ENCODE measurements at regions of chr12 and their contacts with region 1.

Region 1: DNA sequence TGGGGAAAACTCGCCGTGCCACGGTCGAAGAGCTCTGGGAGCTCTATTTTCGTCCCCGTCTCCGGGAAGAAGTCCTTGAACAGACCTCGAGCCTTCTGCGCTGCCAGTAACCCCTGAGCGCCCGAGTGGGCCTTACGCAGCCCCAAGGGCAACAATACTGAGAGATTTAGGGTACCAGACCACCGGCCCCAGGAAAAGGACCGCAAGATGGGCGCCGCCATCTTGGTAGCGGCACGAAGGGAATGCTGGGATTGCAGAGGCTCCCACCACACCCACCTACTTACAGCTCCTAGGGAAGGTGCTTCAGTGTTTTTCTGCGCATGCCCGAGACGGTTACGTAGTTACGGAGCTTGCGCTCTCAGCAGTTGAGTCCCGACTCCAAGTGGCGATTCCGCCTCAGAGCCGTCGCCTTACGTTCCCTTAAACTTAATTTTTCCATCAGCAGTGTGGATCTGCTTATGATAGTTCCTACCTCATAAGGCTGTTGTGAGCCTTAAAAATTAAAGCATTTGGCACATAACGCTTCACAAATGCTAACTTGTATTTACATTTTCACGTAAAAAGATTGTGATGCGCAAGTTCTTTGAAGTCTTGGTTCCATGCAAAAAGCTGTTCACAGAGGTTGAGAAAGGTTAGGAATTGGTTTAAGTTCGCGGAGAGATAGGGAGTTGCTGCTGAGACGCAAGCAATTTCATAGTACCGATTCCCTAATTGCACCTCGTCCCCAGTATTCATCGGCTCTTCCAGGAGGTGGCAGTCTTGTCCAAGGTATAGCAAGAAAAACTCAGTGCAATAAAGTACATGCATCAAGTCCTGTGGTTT is at the start of gene YARS2:
- DNase-seq: peak; percentile 92
- ATAC-seq: peak; percentile 92
- H3K4me3 Mint-ChIP-seq: peak within 1 kb of the TSS; percentile 88
- H3K27ac Mint-ChIP-seq: peak within 1 kb of the TSS; percentile 95
- H3K4me1 Mint-ChIP-seq: peaks cover 20% of the 10 kb centered on the region
- H3K27me3 Mint-ChIP-seq: no peaks in the 10 kb centered on the region
- total RNA-seq, gene YARS2: 33.0 to 45.9 TPM

Region 2: DNA sequence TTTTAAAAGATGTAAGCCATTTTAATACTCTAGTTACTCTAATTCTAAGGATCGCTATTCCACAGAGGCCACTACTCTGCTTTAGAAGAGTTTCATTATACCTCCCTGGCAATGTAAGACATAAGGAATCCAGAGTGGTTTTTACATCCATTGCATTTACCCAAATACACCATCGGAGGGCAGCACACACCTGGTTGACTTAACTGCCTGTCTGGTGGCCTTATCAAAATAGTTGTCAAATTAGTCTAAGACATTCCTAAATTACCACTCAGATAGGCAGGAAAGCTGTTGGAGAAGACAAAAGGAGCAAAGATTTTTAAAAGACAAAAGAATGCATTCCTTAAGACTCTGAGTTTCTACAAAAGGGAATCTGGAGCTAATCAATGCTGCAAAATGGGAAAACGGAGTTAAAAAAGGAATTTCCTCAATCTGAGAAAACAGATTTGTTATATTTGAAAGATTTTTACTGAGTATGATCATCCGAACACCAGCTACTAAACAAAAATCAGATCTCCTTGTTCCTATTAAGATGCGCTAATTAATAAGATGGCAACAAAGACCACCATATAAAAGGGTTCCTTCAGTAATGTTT is 390.3 kb before region 1 on chr12:
- CTCF ChIA-PET with region 1: interaction called, 5 read pairs
- POLR2A ChIA-PET with region 1: no interaction called
- intact Hi-C with region 1: loop called in 1 of 2 experiments (anchors 1 kb)
- DNase-seq: peak; percentile 64
- ATAC-seq: peak; percentile 49
- H3K4me3 Mint-ChIP-seq: no peak overlapping the region
- H3K27ac Mint-ChIP-seq: no peak overlapping the region
- H3K4me1 Mint-ChIP-seq: no peaks in the 10 kb centered on the region
- H3K27me3 Mint-ChIP-seq: no peaks in the 10 kb centered on the region

Region 3: GRCh38 chr12:32467959-32468863 is 287.7 kb before region 1 on chr12:
- CTCF ChIA-PET with region 1: no interaction called
- POLR2A ChIA-PET with region 1: no interaction called
- intact Hi-C with region 1: no loop called
- DNase-seq: no peak
- ATAC-seq: no peak
- H3K4me3 Mint-ChIP-seq: no peak overlapping the region
- H3K27ac Mint-ChIP-seq: no peak overlapping the region
- H3K4me1 Mint-ChIP-seq: no peaks in the 10 kb centered on the region
- H3K27me3 Mint-ChIP-seq: no peaks in the 10 kb centered on the region

Region 4: DNA sequence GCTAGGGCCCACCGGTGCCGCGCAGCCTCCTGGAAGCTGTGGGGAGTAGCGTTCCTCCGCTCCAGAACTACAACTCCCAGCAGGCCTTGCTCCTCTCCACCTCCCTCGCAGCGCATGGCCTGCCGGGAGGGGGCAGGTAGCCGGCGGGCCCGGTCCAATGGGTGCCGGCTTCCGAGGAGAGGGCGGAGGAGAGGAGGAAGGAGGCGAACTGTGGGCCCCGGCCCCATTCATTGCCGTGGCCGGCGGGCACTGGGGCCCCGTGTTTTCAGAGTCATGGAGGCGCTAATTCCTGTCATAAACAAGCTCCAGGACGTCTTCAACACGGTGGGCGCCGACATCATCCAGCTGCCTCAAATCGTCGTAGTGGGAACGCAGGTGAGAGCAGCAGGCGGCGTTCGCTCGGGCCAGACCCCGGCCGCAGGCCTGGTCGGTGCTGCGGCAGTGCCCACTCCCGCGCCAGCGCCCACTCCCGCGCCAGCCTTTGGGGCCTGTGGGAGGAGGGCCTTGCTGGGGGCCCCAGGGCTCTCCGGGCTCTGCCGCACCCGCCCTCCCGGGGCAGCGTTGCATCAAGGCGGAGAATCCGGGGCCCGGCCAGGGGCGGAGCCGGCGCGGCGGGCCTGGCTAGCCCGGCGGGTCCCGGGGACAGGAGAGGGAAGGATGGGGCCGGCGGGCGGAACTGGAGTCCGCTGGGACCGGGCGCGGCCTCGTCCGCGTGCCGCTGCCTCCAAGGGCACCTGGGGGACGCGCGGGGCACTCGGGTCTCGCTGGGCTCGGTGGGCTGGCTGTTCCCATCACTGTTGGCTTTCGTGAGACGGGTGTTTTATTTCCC is 76.6 kb before region 1 on chr12 and contains the start of gene DNM1L:
- CTCF ChIA-PET with region 1: interaction called, 8 read pairs
- POLR2A ChIA-PET with region 1: interaction called, 7 read pairs
- intact Hi-C with region 1: loop called (anchors 1 kb)
- DNase-seq: peak; percentile 96
- ATAC-seq: peak; percentile 99
- H3K4me3 Mint-ChIP-seq: peak within 1 kb of the TSS; percentile 84
- H3K27ac Mint-ChIP-seq: peak within 1 kb of the TSS; percentile 89
- H3K4me1 Mint-ChIP-seq: peaks cover 21% of the 10 kb centered on the region
- H3K27me3 Mint-ChIP-seq: no peaks in the 10 kb centered on the region
- total RNA-seq, gene DNM1L: 67.1 to 68.5 TPM

Region 5: GRCh38 chr12:32773691-32774090 is 17.8 kb after region 1 on chr12:
- CTCF ChIA-PET with region 1: interaction called, 10 read pairs
- POLR2A ChIA-PET with region 1: no interaction called
- intact Hi-C with region 1: no loop called
- DNase-seq: no peak
- ATAC-seq: no peak
- H3K4me3 Mint-ChIP-seq: no peak overlapping the region
- H3K27ac Mint-ChIP-seq: no peak overlapping the region
- H3K4me1 Mint-ChIP-seq: no peaks in the 10 kb centered on the region
- H3K27me3 Mint-ChIP-seq: peaks cover 10% of the 10 kb centered on the region

Region 6: DNA sequence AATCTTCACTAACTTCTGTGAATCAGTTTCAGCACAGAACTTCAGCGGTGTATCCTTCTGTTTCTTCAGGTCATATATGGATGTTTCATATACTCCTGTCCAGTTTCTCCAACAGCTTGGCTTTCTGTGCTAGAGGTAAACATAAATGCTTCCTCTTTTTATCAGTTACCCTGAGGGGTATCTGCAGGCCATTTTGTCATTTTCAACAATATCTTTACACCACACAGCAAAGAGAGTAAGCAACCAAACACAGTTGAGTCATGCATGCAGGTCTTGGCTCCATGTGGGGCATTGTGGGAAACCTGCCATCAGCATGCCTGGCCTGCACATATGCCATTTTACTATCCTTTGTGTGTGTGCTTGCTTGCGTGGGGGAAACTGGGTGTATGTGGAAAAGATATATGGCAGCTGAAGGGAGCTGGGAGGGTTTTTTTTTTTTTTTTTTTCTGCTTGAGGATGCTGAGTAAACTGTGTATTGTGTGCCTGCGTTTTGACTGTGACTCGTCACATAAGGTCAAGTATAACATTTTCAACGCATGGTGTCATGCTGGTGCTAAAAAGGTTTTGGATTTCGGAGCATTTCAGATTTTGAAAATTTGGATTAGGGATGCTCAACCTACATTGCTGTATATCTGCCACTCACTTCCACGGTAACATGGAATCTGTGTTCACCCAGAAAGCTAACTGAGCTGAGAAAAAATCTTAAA is 56.0 kb after region 1 on chr12:
- CTCF ChIA-PET with region 1: no interaction called
- POLR2A ChIA-PET with region 1: no interaction called
- intact Hi-C with region 1: no loop called
- DNase-seq: no peak
- ATAC-seq: no peak
- H3K4me3 Mint-ChIP-seq: no peak overlapping the region
- H3K27ac Mint-ChIP-seq: no peak overlapping the region
- H3K4me1 Mint-ChIP-seq: no peaks in the 10 kb centered on the region
- H3K27me3 Mint-ChIP-seq: peaks cover 8% of the 10 kb centered on the region

Region 7: DNA sequence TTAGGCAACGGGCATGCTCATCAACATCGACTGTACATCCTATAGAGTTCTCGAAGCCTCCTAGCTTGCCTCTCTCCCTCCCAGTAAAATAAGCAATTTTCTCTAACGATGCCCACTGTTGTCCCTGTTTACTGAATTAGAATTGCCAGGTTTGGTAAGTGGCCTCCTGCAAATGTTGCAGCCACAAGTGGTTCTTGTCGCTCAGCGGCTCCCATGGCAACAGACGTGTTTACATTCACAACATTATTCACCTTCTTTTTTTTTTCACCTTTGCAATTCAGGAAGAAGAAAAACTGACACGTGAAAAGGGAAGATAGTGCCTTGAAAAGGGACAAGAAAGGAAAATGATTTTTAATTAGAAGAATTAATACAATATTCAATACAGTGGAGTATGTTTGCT is 241.6 kb after region 1 on chr12:
- CTCF ChIA-PET with region 1: no interaction called
- POLR2A ChIA-PET with region 1: no interaction called
- intact Hi-C with region 1: no loop called
- DNase-seq: no peak
- ATAC-seq: no peak
- H3K4me3 Mint-ChIP-seq: no peak overlapping the region
- H3K27ac Mint-ChIP-seq: no peak overlapping the region
- H3K4me1 Mint-ChIP-seq: no peaks in the 10 kb centered on the region
- H3K27me3 Mint-ChIP-seq: no peaks in the 10 kb centered on the region

Region 8: GRCh38 chr12:34022079-34022830 is 1266.4 kb after region 1 on chr12 and contains the start of gene ALG10:
- CTCF ChIA-PET with region 1: interaction called, 56 read pairs
- POLR2A ChIA-PET with region 1: interaction called, 6 read pairs
- intact Hi-C with region 1: loop called (anchors 1 kb)
- DNase-seq: peak; percentile 97
- ATAC-seq: peak; percentile 100
- H3K4me3 Mint-ChIP-seq: peak within 1 kb of the TSS; percentile 96
- H3K27ac Mint-ChIP-seq: peak within 1 kb of the TSS; percentile 98
- H3K4me1 Mint-ChIP-seq: peaks cover 27% of the 10 kb centered on the region
- H3K27me3 Mint-ChIP-seq: no peaks in the 10 kb centered on the region
- total RNA-seq, gene ALG10: 22.6 to 25.1 TPM

Measured in activated CD4-positive, alpha-beta T cell treated with anti-CD3 and anti-CD28 coated beads for 36 hours (primary cell).